ENCODE measurements at regions of chr2 and their contacts with region 1.

Region 1: GRCh38 chr2:128321784-128322714 is 3.4 kb upstream of the HS6ST1 start:
- DNase-seq: peak; percentile 76 to 95 (median 86)
- ATAC-seq: peak; percentile 60 to 82 (median 76)
- H3K4me3 ChIP-seq: peak overlapping the region; percentile 29 to 61 (median 58)
- H3K27ac ChIP-seq: peak overlapping the region; percentile 56 to 85 (median 73)
- H3K4me1 ChIP-seq: peaks cover 0 to 4% (median 0%) of the 10 kb centered on the region in 3 donors
- H3K27me3 ChIP-seq: no peaks in the 10 kb centered on the region
- CTCF ChIP-seq: peak; percentile 96 to 99 (median 98)

Region 2: DNA sequence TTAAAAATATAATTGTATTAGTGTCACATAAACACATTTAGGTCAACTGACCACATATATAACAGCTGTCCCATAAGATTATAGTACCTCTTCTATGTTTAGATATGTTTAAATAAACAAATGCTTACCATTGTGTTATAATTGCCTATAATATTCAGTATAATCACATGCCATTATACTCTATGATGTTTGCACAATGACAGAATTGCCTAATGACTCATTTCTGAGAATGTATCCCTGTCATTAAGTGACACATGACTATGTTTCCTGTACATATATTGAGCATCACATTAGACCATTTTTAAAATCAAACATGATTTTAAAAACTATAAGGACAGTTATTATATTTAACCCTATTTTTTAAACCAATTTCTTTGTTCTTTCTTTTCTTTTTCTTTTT is 93.2 kb before region 1 on chr2:
- intact Hi-C with region 1: loop called in 1 of 3 experiments (anchors 5 kb)
- DNase-seq: no peak
- ATAC-seq: no peak
- H3K4me3 ChIP-seq: no peak overlapping the region
- H3K27ac ChIP-seq: no peak overlapping the region
- H3K4me1 ChIP-seq: peaks cover 0 to 3% (median 0%) of the 10 kb centered on the region in 3 donors
- H3K27me3 ChIP-seq: no peaks in the 10 kb centered on the region
- CTCF ChIP-seq: no peak

Region 3: DNA sequence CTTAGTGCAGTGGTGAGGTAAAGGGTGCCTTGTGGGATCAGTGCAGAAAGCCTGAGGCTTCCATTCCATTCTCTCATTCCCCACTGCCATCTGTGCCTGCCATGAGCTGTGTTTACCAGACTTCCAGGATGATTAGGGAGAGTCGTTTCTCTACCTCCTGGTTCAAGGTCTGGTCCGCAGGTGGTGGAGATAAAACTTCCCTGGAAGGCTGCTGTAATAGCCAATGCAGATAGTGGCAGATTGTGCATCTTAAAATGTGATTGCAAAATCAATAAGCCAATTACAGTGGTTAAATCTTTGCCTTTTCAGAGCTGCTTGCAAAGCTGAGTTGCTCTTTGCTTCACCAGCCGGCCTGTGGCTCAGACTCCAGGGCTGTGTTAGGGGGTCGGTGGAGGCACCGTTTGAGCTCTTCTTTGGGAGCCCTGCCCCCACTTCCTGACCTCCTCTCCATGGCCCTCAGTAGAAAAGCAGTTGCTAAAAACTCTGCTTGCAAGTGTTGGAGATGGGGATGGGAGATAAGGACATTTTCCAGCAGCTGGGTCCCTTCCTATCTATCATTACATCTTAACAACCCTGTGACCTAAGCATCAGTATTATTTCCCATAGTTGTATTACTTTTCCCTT is 91.8 kb after region 1 on chr2:
- intact Hi-C with region 1: no loop called
- DNase-seq: peak in 3 of 6 donors; percentile 6 to 23 (median 17)
- ATAC-seq: peak; percentile 17 to 71 (median 40)
- H3K4me3 ChIP-seq: no peak overlapping the region
- H3K27ac ChIP-seq: no peak overlapping the region
- H3K4me1 ChIP-seq: peaks cover 0 to 11% (median 5%) of the 10 kb centered on the region in 3 donors
- H3K27me3 ChIP-seq: no peaks in the 10 kb centered on the region
- CTCF ChIP-seq: no peak

Region 4: DNA sequence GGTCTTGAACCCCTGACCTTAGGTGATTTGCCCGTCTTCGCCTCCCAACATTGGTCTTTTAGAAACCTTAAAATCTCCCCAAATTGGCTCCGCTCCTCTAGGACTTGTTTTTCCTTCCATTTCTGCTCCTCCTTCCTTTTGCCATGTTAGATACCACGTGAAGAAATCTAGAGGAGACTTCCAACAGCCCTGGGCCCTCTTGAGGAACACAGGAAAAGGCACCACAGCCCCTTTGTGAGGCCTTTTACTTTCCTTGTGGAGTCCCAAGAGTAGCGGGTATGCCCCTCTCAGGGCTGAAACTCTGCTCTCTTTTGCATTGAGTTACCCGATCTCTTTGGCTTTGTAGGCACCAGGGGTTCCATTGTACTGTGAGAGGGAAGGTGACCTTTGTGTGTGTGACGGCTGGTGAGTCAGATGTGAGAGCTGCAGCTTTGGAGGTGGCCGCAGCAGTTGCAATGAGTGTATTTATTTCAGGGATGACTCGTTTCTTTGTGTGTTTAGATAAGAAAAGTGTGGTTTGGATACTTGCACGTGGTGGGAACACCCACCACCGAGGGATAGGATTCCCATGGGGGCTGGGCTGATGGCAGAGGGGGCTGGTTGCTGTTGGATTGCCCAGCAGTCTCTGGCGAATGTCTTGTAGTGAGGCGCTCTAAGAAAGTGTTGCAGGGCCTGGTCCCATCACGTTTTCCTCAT is 215.0 kb after region 1 on chr2:
- intact Hi-C with region 1: loop called in 1 of 3 experiments (anchors 10 kb)
- DNase-seq: no peak
- ATAC-seq: peak in 1 of 4 donors; percentile 31
- H3K4me3 ChIP-seq: no peak overlapping the region
- H3K27ac ChIP-seq: no peak overlapping the region
- H3K4me1 ChIP-seq: no peaks in the 10 kb centered on the region
- H3K27me3 ChIP-seq: no peaks in the 10 kb centered on the region
- CTCF ChIP-seq: no peak

Region 5: GRCh38 chr2:128593879-128594650 is 272.0 kb after region 1 on chr2:
- intact Hi-C with region 1: loop called in 1 of 3 experiments (anchors 10 kb)
- DNase-seq: peak in 2 of 6 donors; percentile 8 to 25
- ATAC-seq: peak; percentile 48 to 76 (median 60)
- H3K4me3 ChIP-seq: no peak overlapping the region
- H3K27ac ChIP-seq: peak overlapping the region; percentile 33 to 52 (median 40)
- H3K4me1 ChIP-seq: no peaks in the 10 kb centered on the region
- H3K27me3 ChIP-seq: no peaks in the 10 kb centered on the region
- CTCF ChIP-seq: no peak

Region 6: GRCh38 chr2:128797937-128798336 is 475.9 kb after region 1 on chr2:
- intact Hi-C with region 1: no loop called
- DNase-seq: peak in 1 of 6 donors; percentile 2
- ATAC-seq: no peak
- H3K4me3 ChIP-seq: no peak overlapping the region
- H3K27ac ChIP-seq: no peak overlapping the region
- H3K4me1 ChIP-seq: no peaks in the 10 kb centered on the region
- H3K27me3 ChIP-seq: no peaks in the 10 kb centered on the region
- CTCF ChIP-seq: no peak